ENCODE measurements at regions of chr5 and their contacts with region 1.

Region 1: GRCh38 chr5:179613460-179614071 is 9.9 kb downstream of the HNRNPH1 start:
- DNase-seq: no peak
- H3K4me3 ChIP-seq: no peak overlapping the region
- H3K27ac ChIP-seq: no peak overlapping the region
- H3K4me1 ChIP-seq: no peaks in the 10 kb centered on the region
- H3K27me3 ChIP-seq: no peaks in the 10 kb centered on the region
- CTCF ChIP-seq: no peak

Region 2: GRCh38 chr5:179577286-179577960 is 36.1 kb before region 1 on chr5:
- CTCF ChIA-PET with region 1: no interaction called
- dilution Hi-C with region 1: loop called (anchors 5 kb)
- in situ Hi-C with region 1: no loop called
- intact Hi-C with region 1: no loop called
- DNase-seq: no peak
- H3K4me3 ChIP-seq: no peak overlapping the region
- H3K27ac ChIP-seq: no peak overlapping the region
- H3K4me1 ChIP-seq: no peaks in the 10 kb centered on the region
- H3K27me3 ChIP-seq: no peaks in the 10 kb centered on the region
- CTCF ChIP-seq: no peak

Region 3: GRCh38 chr5:179678223-179679013 is 64.9 kb after region 1 on chr5:
- CTCF ChIA-PET with region 1: no interaction called
- dilution Hi-C with region 1: loop called (anchors 5 kb)
- in situ Hi-C with region 1: no loop called
- intact Hi-C with region 1: no loop called
- DNase-seq: peak; percentile 90
- H3K4me3 ChIP-seq: peak overlapping the region; percentile 54 to 98 (median 90)
- H3K27ac ChIP-seq: peak overlapping the region; percentile 42
- H3K4me1 ChIP-seq: peaks cover 12% of the 10 kb centered on the region
- H3K27me3 ChIP-seq: no peaks in the 10 kb centered on the region
- CTCF ChIP-seq: peak in 1 of 2 donors; percentile 13